Left ventricle myocardium inferior (tissue), 1 donor: ENCODE measurements at regions of chr19 and their contacts with region 1.

Region 1: GRCh38 chr19:47157431-47158321 is 27.0 kb downstream of the SAE1 start:
- DNase-seq: peak; percentile 45
- H3K4me3 ChIP-seq: peak overlapping the region; percentile 31
- H3K27ac ChIP-seq: peak overlapping the region; percentile 93
- H3K4me1 ChIP-seq: peaks cover 58% of the 10 kb centered on the region
- H3K27me3 ChIP-seq: no peaks in the 10 kb centered on the region
- CTCF ChIP-seq: peak; percentile 27

Region 2: DNA sequence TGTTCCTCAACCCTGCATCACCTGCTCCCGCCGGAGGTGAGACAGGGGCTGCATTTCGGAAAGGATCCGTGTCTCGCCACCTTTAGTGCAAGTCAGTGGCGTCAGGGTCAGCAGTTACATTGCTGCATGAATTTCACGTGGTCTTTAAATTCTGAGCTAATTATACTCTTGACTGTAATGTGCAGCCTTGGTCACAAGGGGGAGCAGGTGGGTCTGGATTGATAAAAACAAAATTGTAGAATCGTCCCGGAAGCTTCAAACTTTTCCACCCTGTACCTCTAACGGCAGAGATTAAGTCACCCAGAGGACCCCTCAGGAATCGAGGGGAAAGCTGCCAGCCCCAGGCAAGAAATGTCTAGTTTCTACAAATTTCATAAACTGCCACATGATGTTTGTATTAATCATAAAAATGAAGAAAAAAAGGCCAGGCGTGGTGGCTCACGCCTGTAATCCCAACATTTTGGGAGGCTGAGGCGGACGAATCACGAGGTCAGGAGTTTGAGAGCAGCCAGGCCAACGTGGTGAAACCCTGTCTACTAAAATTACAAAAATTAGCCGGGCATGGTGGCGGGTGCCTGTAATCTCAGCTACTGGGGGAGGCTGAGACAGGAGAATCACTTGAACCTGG is 53.1 kb after region 1 on chr19:
- intact Hi-C with region 1: loop called (anchors 10 kb)
- DNase-seq: peak; percentile 65
- H3K4me3 ChIP-seq: no peak overlapping the region
- H3K27ac ChIP-seq: peak overlapping the region; percentile 53
- H3K4me1 ChIP-seq: peaks cover 25% of the 10 kb centered on the region
- H3K27me3 ChIP-seq: no peaks in the 10 kb centered on the region
- CTCF ChIP-seq: peak; percentile 86